GM10248 (cell line): ENCODE measurements at regions of chr19 and their contacts with region 1.

Region 1: GRCh38 chr19:52527134-52527955 is at the start of gene ZNF808:
- DNase-seq: peak; percentile 89
- CTCF ChIP-seq: peak; percentile 33

Region 2: GRCh38 chr19:52369559-52370340 is 157.6 kb before region 1 on chr19 and contains the start of gene ZNF880:
- CTCF ChIA-PET with region 1: no interaction called
- POLR2A ChIA-PET with region 1: interaction called, 11 read pairs
- DNase-seq: peak; percentile 86
- CTCF ChIP-seq: no peak

Region 3: GRCh38 chr19:52516191-52516590 is 11.2 kb before region 1 on chr19:
- CTCF ChIA-PET with region 1: no interaction called
- POLR2A ChIA-PET with region 1: no interaction called
- DNase-seq: no peak
- CTCF ChIP-seq: no peak